MCF 10A (cell line): ENCODE measurements at regions of chr17 and their contacts with region 1.

Region 1: GRCh38 chr17:8156246-8156992 is 4.2 kb upstream of the PER1 start:
- DNase-seq: peak; percentile 100
- H3K4me3 Mint-ChIP-seq: no peak overlapping the region
- H3K27ac Mint-ChIP-seq: no peak overlapping the region
- H3K4me1 Mint-ChIP-seq: peaks cover 38% of the 10 kb centered on the region
- H3K27me3 Mint-ChIP-seq: no peaks in the 10 kb centered on the region
- CTCF ChIP-seq: no peak

Region 2: DNA sequence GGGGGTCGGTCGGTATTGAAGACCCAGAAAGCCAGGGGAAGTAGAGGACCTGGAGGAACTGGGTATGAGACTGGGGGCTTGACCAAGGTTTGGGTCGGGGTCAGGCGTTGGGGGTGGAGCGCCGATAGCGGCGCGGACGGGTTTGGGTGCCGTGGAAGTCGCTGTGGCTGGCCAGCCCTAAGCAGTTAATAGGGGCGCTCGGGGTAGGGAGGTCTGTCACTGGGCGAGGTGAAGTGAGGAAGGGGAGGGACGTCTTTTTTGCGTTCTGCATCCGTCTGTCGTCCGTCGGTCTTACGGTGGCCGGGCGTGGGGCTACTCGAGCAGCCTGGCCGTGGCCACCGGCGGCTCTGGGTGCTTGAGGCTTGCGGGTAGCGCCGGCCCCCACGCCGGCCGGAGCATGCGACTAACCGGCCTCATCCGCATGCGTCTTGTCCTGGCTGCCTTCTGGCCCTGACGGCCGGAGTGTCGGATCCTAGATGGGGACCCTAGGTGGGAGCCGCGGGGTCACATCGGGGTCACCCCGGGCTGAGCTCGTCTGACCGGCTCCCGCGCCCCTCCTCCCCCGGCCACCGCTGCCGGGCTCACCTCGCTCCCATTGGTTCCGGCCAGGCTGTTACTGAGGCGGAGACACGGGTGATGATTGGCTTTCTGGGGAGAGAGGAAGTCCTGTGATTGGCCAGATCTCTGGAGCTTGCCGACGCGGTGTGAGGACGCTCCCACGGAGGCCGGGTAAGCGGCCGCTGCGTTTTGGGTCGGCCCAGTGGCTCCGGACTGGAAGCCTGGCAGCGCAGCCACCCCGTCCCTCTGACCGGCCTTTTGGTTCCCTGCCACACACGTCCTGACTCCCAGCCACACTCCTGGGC is 311.9 kb before region 1 on chr17:
- CTCF ChIA-PET with region 1: no interaction called
- POLR2A ChIA-PET with region 1: interaction called, 15 read pairs
- intact Hi-C with region 1: no loop called
- DNase-seq: peak; percentile 96
- H3K4me3 Mint-ChIP-seq: peak overlapping the region; percentile 79
- H3K27ac Mint-ChIP-seq: peak overlapping the region; percentile 87
- H3K4me1 Mint-ChIP-seq: peaks cover 27% of the 10 kb centered on the region
- H3K27me3 Mint-ChIP-seq: no peaks in the 10 kb centered on the region
- CTCF ChIP-seq: no peak

Region 3: DNA sequence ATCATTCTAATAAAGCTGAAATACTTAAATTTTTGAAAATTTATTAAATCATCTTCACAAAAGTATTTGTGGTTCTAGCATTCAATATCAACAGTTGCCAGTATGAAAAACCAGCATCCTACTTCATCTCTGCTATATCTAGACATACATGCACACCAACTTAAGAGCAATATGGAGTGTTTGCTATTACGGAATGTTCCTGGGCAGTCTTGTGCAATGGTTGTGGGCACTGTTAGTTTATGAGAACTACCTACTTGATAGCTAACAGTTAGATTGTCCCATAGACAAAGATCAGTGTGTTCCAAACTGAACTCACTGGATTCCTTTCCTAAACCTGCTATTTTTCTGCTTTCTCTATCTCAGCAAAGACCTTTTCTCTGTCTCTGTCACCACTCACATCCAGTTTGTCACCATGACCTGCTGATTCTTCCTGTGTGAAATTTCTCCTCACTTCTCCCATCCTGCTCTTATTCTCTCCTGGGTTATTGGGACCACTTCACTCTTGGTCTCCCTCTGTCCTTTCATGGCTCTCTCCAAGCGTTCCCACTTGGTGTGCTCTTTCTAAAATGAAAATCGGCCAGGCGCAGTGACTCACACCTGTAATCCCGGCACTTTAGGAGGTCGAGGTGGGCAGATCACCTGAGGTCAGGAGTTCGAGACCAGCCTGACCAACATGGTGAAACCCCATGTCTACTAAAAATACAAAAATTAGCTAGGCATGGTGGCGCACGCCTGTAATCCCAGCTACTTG is 196.7 kb before region 1 on chr17:
- CTCF ChIA-PET with region 1: no interaction called
- POLR2A ChIA-PET with region 1: no interaction called
- intact Hi-C with region 1: no loop called
- DNase-seq: peak; percentile 27
- H3K4me3 Mint-ChIP-seq: no peak overlapping the region
- H3K27ac Mint-ChIP-seq: no peak overlapping the region
- H3K4me1 Mint-ChIP-seq: peaks cover 6% of the 10 kb centered on the region
- H3K27me3 Mint-ChIP-seq: no peaks in the 10 kb centered on the region
- CTCF ChIP-seq: no peak

Region 4: DNA sequence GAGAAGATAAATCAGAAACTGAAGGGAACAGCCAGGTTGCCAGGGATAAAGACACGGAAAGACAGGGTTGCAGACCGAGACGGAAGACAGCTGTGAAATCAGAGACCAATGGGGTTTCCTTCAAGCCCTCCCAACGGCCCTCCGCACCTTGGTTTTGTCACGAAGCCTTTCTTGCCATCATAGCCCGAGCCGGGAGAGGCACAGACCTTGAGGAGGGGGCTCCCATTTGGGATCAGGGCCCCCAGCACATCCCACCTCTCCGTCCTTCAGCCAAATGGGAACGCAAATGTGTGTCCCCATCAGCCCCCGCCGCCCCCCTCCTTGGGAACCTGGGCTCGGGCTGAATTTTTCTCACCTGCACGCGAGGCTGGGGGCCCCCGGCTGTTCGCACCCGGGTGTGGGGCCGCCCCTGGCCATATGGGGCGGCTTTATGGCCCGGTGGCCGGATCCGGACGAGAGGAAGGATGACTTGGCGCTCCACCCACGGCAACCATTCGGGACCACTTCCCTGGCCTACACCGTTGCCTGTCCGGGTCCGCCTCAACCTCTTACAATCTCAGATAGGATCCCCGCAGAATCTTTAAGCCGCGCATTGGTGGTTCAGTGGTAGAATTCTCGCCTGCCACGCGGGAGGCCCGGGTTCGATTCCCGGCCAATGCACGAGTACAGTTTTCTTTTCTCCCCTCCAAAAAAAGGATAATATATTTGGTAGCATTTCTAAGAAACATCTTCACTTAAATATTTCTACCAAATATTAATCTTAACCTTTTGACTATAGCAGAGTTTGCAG is 31.1 kb before region 1 on chr17:
- CTCF ChIA-PET with region 1: interaction called, 16 read pairs
- POLR2A ChIA-PET with region 1: interaction called, 429 read pairs
- intact Hi-C with region 1: loop called (anchors 1 kb)
- DNase-seq: peak; percentile 75
- H3K4me3 Mint-ChIP-seq: peak overlapping the region; percentile 86
- H3K27ac Mint-ChIP-seq: peak overlapping the region; percentile 46
- H3K4me1 Mint-ChIP-seq: peaks cover 44% of the 10 kb centered on the region
- H3K27me3 Mint-ChIP-seq: no peaks in the 10 kb centered on the region
- CTCF ChIP-seq: no peak

Region 5: DNA sequence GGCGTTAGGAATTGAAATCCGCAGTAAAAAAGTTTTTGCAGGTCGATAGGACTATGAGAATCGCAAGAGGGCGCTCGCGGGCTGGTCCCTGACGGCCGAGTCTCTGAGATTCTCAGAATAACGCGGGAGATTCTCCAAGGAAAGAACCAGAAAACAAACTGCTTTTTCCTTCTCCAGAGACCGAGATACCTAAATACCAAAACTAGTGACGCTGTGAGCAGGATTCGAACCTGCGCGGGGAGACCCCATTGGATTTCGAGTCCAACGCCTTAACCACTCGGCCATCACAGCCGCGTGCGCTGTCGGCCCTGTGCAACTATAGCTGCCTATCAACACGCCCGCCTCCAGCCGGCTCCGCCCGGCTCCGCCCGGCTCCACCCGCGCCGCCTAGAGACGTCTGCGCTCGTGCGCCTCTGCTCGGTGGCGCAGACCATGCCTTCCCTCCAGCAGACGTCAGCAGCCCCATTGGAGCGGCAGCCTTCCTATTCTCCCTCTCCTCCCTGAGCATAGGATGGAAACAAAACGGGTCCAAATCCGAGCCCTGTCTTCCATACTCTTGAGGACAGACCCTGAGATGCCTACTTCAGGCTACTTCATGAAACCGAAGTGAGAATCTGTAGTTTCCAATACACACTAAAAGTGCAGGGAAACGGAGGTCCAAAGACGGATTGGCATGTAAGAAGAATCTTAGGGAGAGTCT is 17.6 kb before region 1 on chr17:
- CTCF ChIA-PET with region 1: interaction called, 59 read pairs
- POLR2A ChIA-PET with region 1: interaction called, 429 read pairs
- intact Hi-C with region 1: loop called (anchors 1 kb)
- DNase-seq: peak; percentile 95
- H3K4me3 Mint-ChIP-seq: no peak overlapping the region
- H3K27ac Mint-ChIP-seq: no peak overlapping the region
- H3K4me1 Mint-ChIP-seq: peaks cover 11% of the 10 kb centered on the region
- H3K27me3 Mint-ChIP-seq: no peaks in the 10 kb centered on the region
- CTCF ChIP-seq: peak; percentile 71

Region 6: DNA sequence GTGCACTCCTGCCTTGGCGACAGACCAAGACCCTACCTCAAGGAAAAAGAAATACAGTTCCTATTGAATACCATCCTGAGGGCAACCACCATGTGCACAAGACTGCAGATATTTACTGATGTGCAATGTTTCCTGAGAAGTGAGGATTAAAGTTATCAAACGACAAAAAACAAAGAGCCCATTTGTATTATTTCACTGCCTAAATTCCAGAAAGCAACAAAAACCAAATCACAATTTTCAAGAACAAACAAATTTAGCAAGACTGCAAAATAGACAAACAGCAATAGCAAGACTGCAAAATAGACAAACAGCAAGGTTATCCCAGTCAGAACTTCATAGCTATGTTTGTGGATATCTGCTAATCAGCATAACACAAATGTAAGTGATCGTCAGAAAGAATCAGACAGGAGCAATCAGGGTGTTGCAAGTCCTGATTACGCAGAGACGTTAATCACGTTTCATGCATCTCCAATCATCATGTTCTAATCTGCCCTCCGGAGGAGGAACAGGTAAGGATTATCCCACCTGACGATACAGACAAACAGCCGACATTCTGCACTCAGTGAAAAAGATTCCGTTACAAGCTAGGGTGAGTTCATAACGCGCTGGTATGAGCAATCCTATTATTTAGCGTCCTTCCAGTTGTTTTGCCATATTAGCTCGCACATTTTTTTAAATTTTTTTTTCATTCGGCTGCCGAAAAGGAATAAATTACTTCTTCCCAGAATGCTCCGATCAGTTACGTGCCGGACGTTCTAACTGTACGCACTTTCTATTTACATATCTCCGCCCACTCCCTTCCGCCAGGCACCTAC is 16.8 kb after region 1 on chr17:
- CTCF ChIA-PET with region 1: interaction called, 10 read pairs
- POLR2A ChIA-PET with region 1: interaction called, 148 read pairs
- intact Hi-C with region 1: no loop called
- DNase-seq: peak; percentile 99
- H3K4me3 Mint-ChIP-seq: peak overlapping the region; percentile 91
- H3K27ac Mint-ChIP-seq: peak overlapping the region; percentile 100
- H3K4me1 Mint-ChIP-seq: peaks cover 27% of the 10 kb centered on the region
- H3K27me3 Mint-ChIP-seq: no peaks in the 10 kb centered on the region
- CTCF ChIP-seq: no peak

Region 7: DNA sequence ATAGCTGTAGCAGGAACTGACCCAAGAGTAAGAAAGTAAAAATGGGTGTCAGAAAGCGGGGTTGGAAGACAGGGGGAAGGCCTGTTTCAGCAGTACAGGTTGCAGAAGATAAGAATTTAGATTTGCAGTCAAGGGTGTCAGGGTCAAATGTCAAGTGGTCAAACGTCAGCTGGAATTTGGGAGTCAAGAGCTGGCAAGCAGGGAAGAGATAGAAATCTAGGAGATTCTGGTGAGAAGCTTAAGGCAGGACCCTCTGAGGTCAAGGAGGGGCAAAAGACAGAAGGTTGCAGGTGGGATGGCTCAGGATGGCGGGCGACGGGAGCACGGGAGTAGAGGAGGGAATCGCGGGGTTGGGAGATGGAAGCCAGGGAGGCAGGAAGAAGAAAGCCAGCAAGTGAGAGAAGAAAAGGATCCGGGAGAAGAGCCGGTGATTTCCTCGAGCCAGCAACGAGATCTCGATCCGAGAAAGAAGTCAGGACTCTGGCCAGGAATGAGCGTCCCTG is 138.4 kb after region 1 on chr17:
- CTCF ChIA-PET with region 1: interaction called, 3 read pairs
- POLR2A ChIA-PET with region 1: interaction called, 17 read pairs
- intact Hi-C with region 1: no loop called
- DNase-seq: no peak
- H3K4me3 Mint-ChIP-seq: peak overlapping the region; percentile 92
- H3K27ac Mint-ChIP-seq: peak overlapping the region; percentile 91
- H3K4me1 Mint-ChIP-seq: peaks cover 21% of the 10 kb centered on the region
- H3K27me3 Mint-ChIP-seq: no peaks in the 10 kb centered on the region
- CTCF ChIP-seq: no peak

Region 8: DNA sequence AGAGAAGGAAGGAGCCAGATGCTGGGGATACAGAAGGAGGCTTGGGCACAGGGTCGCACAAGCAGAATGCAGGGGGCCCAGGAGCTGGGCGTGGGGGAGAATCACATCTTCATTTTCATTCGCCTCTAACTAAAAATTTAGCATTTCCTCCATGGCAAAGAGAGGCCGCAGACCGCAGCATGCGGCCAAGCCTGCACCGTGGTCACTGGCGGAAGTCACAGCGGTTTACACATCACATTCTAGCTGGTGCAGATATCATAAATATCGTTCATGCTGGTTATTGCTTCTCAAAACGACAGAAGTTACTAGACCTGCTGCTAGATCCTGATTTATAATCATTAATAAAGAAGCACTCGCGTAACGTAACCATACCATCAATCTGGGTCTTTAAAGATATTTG is 1026.9 kb after region 1 on chr17:
- CTCF ChIA-PET with region 1: no interaction called
- POLR2A ChIA-PET with region 1: no interaction called
- intact Hi-C with region 1: no loop called
- DNase-seq: no peak
- H3K4me3 Mint-ChIP-seq: no peak overlapping the region
- H3K27ac Mint-ChIP-seq: no peak overlapping the region
- H3K4me1 Mint-ChIP-seq: no peaks in the 10 kb centered on the region
- H3K27me3 Mint-ChIP-seq: no peaks in the 10 kb centered on the region
- CTCF ChIP-seq: no peak